ENCODE measurements at regions of chr16 and their contacts with region 1.

Region 1: DNA sequence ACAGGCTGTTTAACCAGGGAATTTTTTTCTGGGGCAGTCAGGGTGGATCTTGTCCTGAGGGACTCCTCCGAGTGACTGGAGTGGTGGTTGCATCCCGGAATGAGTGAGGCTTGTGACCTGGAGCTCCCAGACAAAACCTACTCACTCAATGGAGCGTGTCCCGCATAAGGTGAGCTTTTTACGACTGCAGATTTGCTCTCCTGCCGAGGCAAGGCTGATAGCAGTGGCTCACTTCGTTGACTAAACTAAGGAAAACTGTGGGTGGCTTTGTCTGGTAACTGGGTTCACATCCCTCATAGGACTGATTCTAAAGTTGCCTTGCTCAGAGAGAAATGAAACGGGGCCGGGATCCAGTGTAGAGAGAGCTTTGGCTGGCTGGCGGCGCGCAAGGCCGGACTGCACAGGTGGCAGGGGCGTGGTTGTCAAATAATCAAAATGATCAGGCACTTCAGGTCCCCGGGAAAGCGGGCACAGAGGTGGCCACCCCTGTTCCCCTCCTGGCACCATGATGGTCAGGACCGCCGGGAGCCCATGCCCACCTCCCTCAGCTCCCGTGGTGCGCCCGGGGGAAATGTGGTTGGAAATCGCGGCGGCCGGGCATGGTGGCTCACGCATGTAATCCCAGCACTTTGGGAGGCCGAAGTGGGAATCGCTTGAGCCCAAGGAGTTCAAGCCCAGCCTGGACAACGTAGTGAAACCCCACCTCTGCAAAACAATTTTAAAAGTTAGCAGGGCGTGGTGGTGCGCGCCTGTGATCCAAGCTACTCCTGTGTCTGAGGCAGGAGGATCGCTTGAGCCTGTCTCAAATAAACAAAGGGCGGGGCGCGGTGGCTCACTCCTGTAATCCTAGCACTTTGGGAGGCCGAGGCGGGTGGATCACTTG is 26.5 kb downstream of the ZNF213 start:
- DNase-seq: no peak
- ATAC-seq: no peak
- H3K4me3 ChIP-seq: no peak overlapping the region
- H3K27ac ChIP-seq: no peak overlapping the region
- H3K4me1 ChIP-seq: peaks cover 2 to 32% (median 28%) of the 10 kb centered on the region in 9 donors
- H3K27me3 ChIP-seq: peaks cover 0 to 7% (median 0%) of the 10 kb centered on the region in 7 donors
- CTCF ChIP-seq: no peak

Region 2: DNA sequence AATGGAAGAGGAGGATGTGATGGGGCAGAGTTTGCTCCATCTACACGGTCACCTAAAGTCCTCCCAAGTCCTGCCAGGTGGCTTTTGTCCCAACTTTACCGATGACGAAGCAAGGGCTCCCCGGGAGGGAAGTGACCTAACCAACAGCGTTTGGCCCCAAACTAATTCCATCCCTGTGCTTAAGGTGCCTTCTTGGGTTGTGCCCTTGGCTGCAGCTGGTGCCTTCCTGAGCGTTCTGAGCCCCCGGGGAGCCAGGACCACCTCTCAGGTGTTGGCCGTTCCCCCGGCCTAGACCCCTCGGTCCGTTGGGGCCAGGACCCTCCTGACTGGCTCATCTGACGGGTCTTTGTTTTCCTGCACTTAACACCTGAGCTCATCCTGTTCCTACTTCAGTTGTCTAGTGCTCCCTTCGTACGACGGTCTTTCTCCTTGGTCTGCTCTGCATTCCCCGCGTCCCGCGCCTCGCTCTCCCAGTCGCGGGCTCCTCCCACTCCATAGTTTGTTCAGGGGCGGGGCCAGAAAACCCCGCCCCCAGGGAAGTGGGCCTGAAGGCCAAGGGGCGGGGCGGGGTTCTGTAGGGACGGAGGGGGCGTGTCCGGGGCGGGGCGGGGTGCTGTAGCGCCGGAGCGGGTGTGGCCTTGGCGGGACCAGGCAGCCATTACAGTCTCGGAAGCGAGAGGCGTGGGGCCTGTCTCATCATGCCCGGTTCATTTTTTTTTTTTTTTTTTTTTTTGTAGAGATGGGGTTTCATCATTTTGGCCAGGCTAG is 61.5 kb before region 1 on chr16:
- intact Hi-C with region 1: loop called in 2 of 10 experiments (anchors 10 kb)
- DNase-seq: peak; percentile 93 to 94
- ATAC-seq: peak; percentile 89 to 95 (median 94)
- H3K4me3 ChIP-seq: peak overlapping the region in 6 of 10 donors; percentile 11 to 43 (median 35)
- H3K27ac ChIP-seq: peak overlapping the region in 9 of 10 donors; percentile 49 to 90 (median 82)
- H3K4me1 ChIP-seq: peaks cover 6 to 55% (median 34%) of the 10 kb centered on the region in 9 donors
- H3K27me3 ChIP-seq: peaks cover 0 to 4% (median 0%) of the 10 kb centered on the region in 7 donors
- CTCF ChIP-seq: no peak

Region 3: DNA sequence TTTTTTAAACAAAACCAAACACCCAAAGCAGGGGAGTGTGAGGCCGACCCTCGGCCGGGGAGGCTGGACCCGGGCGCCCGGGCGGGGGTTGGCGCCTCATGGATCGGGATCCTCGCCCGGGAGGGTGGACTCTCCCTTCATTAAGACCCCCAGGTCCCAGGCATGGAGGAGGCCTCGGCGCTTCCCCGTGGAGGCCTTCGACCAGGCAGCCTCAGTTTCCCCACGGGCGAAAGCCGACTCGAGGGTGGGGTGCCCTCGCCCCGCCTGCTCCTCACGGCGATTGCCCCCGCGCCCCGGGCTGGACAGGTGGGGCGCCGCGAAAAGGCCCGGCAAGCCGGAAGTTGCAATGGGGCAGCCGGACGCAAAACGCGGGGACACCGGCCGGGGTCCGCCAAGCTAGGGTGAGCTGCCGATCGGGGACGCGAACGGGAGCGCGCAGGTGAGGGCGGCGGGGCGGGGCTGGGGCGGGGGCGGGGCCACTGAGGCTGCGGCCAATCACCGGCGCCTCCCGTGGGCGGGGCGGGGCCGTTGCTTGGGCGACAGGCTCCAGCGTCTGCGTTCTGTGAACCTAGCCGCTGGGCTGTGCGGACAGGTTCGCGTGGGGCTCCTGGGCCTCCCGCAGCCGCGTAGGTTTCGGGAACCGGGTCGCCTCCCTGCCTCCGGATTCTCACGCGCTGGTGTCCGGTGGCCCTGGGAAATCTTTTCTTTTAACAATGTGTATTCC is 55.0 kb before region 1 on chr16:
- intact Hi-C with region 1: loop called in 1 of 10 experiments (anchors 10 kb)
- DNase-seq: peak; percentile 89 to 90
- ATAC-seq: peak; percentile 91 to 97 (median 94)
- H3K4me3 ChIP-seq: peak overlapping the region; percentile 40 to 79 (median 66)
- H3K27ac ChIP-seq: peak overlapping the region; percentile 63 to 97 (median 86)
- H3K4me1 ChIP-seq: peaks cover 6 to 38% (median 32%) of the 10 kb centered on the region in 9 donors
- H3K27me3 ChIP-seq: no peaks in the 10 kb centered on the region
- CTCF ChIP-seq: peak in 1 of 9 donors; percentile 6

Region 4: GRCh38 chr16:3118204-3118806 is 43.1 kb before region 1 on chr16:
- intact Hi-C with region 1: no loop called
- DNase-seq: no peak
- ATAC-seq: no peak
- H3K4me3 ChIP-seq: no peak overlapping the region
- H3K27ac ChIP-seq: no peak overlapping the region
- H3K4me1 ChIP-seq: peaks cover 8 to 32% (median 17%) of the 10 kb centered on the region in 9 donors
- H3K27me3 ChIP-seq: no peaks in the 10 kb centered on the region
- CTCF ChIP-seq: no peak

Region 5: GRCh38 chr16:3129137-3130131 is 31.9 kb before region 1 on chr16:
- intact Hi-C with region 1: loop called in 1 of 10 experiments (anchors 5 kb)
- DNase-seq: peak; percentile 62 to 84
- ATAC-seq: peak; percentile 68 to 81 (median 79)
- H3K4me3 ChIP-seq: peak overlapping the region in 9 of 10 donors; percentile 27 to 66 (median 59)
- H3K27ac ChIP-seq: peak overlapping the region in 9 of 10 donors; percentile 57 to 92 (median 80)
- H3K4me1 ChIP-seq: peaks cover 3 to 51% (median 38%) of the 10 kb centered on the region in 9 donors
- H3K27me3 ChIP-seq: no peaks in the 10 kb centered on the region
- CTCF ChIP-seq: peak; percentile 81 to 96 (median 94)